ENCODE measurements at regions of chrX and their contacts with region 1.

Region 1: GRCh38 chrX:102950908-102951866 is 14.1 kb downstream of the RAB40AL start:
- DNase-seq: peak; percentile 9 to 63 (median 54)
- ATAC-seq: peak; percentile 77
- H3K4me3 ChIP-seq: peak overlapping the region; percentile 17 to 33
- H3K4me3 Mint-ChIP-seq: peak overlapping the region; percentile 79
- H3K27ac ChIP-seq: no peak overlapping the region
- H3K27ac Mint-ChIP-seq: no peak overlapping the region
- H3K4me1 ChIP-seq: no peaks in the 10 kb centered on the region
- H3K4me1 Mint-ChIP-seq: peaks cover 3% of the 10 kb centered on the region
- H3K27me3 ChIP-seq: no peaks in the 10 kb centered on the region
- H3K27me3 Mint-ChIP-seq: no peaks in the 10 kb centered on the region
- CTCF ChIP-seq: peak; percentile 66

Region 2: DNA sequence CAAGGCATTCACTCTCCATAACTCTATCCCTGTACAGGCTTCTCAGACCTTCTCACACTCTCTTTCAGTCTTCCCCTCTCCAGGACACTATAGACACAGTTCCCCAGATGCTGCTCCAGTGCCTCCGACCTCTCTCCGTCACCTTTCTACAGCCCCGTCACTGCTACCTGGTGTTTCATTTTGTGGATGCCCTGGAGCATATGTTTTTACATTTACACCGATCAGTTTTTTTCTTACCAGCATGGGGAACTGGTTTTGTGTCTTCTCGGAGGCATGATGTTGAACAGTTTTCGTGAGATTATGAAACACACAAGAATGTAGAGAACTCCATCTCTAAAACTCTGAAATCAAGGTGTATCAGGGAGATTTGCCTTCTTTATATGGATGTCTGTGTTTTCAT is 16.1 kb before region 1 on chrX:
- CTCF ChIA-PET with region 1: interaction called, 18 read pairs
- POLR2A ChIA-PET with region 1: no interaction called
- intact Hi-C with region 1: no loop called
- DNase-seq: no peak
- ATAC-seq: no peak
- H3K4me3 ChIP-seq: no peak overlapping the region
- H3K4me3 Mint-ChIP-seq: no peak overlapping the region
- H3K27ac ChIP-seq: no peak overlapping the region
- H3K27ac Mint-ChIP-seq: no peak overlapping the region
- H3K4me1 ChIP-seq: no peaks in the 10 kb centered on the region
- H3K4me1 Mint-ChIP-seq: no peaks in the 10 kb centered on the region
- H3K27me3 ChIP-seq: no peaks in the 10 kb centered on the region
- H3K27me3 Mint-ChIP-seq: no peaks in the 10 kb centered on the region
- CTCF ChIP-seq: peak; percentile 20

Region 3: GRCh38 chrX:102964940-102965339 is 13.8 kb after region 1 on chrX:
- CTCF ChIA-PET with region 1: interaction called, 18 read pairs
- POLR2A ChIA-PET with region 1: no interaction called
- intact Hi-C with region 1: no loop called
- DNase-seq: no peak
- ATAC-seq: no peak
- H3K4me3 ChIP-seq: no peak overlapping the region
- H3K4me3 Mint-ChIP-seq: no peak overlapping the region
- H3K27ac ChIP-seq: no peak overlapping the region
- H3K27ac Mint-ChIP-seq: no peak overlapping the region
- H3K4me1 ChIP-seq: no peaks in the 10 kb centered on the region
- H3K4me1 Mint-ChIP-seq: no peaks in the 10 kb centered on the region
- H3K27me3 ChIP-seq: no peaks in the 10 kb centered on the region
- H3K27me3 Mint-ChIP-seq: no peaks in the 10 kb centered on the region
- CTCF ChIP-seq: no peak

Region 4: DNA sequence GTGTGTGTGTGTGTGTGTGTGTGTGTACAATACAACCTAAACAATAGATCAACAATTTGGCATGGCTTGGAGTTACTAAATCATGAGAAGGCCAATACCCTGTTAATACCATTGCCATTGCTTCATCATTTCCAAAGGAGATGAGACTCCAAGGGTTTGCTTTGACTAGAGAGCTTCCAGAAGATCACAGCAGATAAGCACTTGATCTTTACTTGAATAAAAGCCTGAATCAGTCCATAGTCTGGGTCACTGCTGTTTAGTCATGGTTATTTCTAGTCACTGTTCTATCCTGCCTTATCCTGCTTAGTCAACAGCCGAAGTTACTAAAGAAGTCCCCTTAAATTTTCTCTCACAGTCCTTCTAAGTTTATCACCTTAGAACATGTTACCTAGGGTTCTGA is 44.1 kb after region 1 on chrX:
- CTCF ChIA-PET with region 1: no interaction called
- POLR2A ChIA-PET with region 1: no interaction called
- intact Hi-C with region 1: no loop called
- DNase-seq: no peak
- ATAC-seq: no peak
- H3K4me3 ChIP-seq: no peak overlapping the region
- H3K4me3 Mint-ChIP-seq: no peak overlapping the region
- H3K27ac ChIP-seq: no peak overlapping the region
- H3K27ac Mint-ChIP-seq: no peak overlapping the region
- H3K4me1 ChIP-seq: no peaks in the 10 kb centered on the region
- H3K4me1 Mint-ChIP-seq: no peaks in the 10 kb centered on the region
- H3K27me3 ChIP-seq: no peaks in the 10 kb centered on the region
- H3K27me3 Mint-ChIP-seq: no peaks in the 10 kb centered on the region
- CTCF ChIP-seq: no peak

Region 5: GRCh38 chrX:103175944-103176753 is 225.0 kb after region 1 on chrX:
- CTCF ChIA-PET with region 1: interaction called, 12 read pairs
- POLR2A ChIA-PET with region 1: no interaction called
- intact Hi-C with region 1: loop called in 1 of 2 experiments (anchors 2 kb)
- DNase-seq: peak; percentile 15 to 59 (median 53)
- ATAC-seq: peak; percentile 68
- H3K4me3 ChIP-seq: no peak overlapping the region
- H3K4me3 Mint-ChIP-seq: peak overlapping the region; percentile 31
- H3K27ac ChIP-seq: no peak overlapping the region
- H3K27ac Mint-ChIP-seq: no peak overlapping the region
- H3K4me1 ChIP-seq: peaks cover 4% of the 10 kb centered on the region
- H3K4me1 Mint-ChIP-seq: peaks cover 3% of the 10 kb centered on the region
- H3K27me3 ChIP-seq: no peaks in the 10 kb centered on the region
- H3K27me3 Mint-ChIP-seq: peaks cover 15% of the 10 kb centered on the region
- CTCF ChIP-seq: peak; percentile 49

Region 6: GRCh38 chrX:103464774-103465117 is 513.6 kb after region 1 on chrX:
- CTCF ChIA-PET with region 1: interaction called, 5 read pairs
- POLR2A ChIA-PET with region 1: no interaction called
- intact Hi-C with region 1: loop called (anchors 1 to 5 kb)
- DNase-seq: peak; percentile 49 to 81 (median 68)
- ATAC-seq: peak; percentile 94
- H3K4me3 ChIP-seq: peak overlapping the region; percentile 43 to 45
- H3K4me3 Mint-ChIP-seq: peak overlapping the region; percentile 93
- H3K27ac ChIP-seq: no peak overlapping the region
- H3K27ac Mint-ChIP-seq: peak overlapping the region; percentile 90
- H3K4me1 ChIP-seq: no peaks in the 10 kb centered on the region
- H3K4me1 Mint-ChIP-seq: peaks cover 18% of the 10 kb centered on the region
- H3K27me3 ChIP-seq: no peaks in the 10 kb centered on the region
- H3K27me3 Mint-ChIP-seq: no peaks in the 10 kb centered on the region
- CTCF ChIP-seq: peak; percentile 41

Measured in CD8-positive, alpha-beta T cell (primary cell).